ENCODE measurements at regions of chr16 and their contacts with region 1.

Region 1: DNA sequence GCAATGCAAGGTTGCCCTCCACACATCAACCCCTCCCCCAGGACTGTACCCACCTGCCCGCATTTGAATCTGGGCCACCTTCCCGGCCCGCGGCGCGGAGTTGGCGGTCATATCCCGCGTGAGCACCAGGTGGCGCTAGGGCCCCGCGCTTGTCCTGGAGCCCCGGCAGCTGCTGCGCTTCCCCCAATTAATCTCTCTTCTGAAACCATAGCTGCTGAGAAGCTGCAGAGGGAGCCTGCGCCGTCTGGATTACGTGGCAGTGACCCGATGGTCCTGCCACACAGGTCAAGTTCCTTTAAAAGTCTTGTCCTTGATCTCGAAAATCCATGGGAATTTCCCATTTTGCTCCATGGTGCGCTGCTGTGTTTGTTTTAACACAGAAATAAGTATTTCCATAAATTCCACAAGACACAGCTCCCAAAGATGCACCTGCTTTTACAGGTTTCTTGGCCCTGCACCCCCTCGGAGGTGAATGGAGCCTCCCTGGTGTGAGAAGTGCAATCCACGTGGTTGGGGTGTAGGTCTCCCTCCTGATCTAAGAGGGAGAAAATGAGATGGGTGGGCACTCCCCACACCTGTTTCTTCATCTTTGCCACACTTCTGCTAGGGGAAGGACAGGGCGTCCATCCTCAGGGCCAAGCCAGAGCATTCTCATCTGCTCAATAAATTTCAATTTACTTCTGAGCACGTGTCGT is 22.1 kb downstream of the COX4I1 start:
- DNase-seq: peak; percentile 85
- H3K27ac ChIP-seq: no peak overlapping the region
- CTCF ChIP-seq: peak; percentile 95

Region 2: DNA sequence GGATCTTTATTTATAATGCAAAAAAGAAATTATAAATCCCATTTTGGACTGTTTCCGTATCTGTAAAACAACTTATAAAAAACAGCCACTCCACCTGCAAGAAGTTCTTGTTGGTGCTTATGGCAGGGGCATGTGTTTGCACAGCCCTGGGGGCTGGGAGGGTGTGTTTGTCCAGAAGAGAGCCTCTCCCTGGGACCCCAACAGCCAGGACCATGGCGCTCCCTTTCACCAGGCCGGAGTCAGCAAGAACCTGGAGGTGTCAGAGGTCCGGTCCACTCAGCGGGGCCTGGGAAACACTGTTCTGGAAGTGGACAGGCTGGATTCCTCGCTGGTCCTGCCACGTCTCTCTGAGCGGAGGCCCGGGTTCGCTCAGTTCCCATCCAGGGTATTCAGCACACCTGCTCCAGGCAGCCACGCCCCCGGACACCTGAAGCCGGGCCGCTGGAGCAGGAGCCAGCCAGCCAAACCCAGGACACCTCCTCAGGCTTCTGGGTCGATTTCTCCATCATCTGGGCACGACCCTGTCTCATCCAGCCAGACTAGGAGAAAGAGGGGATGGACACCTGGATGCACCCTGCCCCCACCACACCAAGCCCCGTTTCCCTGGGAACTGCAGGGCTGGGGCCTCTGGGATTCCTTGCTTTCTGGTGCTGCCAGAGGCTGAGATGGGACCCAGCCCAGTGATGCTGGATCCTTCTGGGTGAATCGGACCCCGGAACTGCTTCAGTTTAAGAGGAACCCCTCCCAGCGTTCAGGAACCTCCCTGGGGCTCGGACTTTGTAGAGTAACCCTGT is 113.9 kb before region 1 on chr16:
- CTCF ChIA-PET with region 1: no interaction called
- POLR2A ChIA-PET with region 1: no interaction called
- DNase-seq: no peak
- H3K27ac ChIP-seq: peak overlapping the region; percentile 37
- CTCF ChIP-seq: no peak

Region 3: GRCh38 chr16:85898521-85899442 is 77.2 kb after region 1 on chr16 and contains the start of gene IRF8:
- CTCF ChIA-PET with region 1: interaction called, 13 read pairs
- POLR2A ChIA-PET with region 1: no interaction called
- DNase-seq: no peak
- H3K27ac ChIP-seq: no peak within 1 kb of the TSS
- CTCF ChIP-seq: no peak

Region 4: GRCh38 chr16:85986931-85987749 is 165.6 kb after region 1 on chr16:
- CTCF ChIA-PET with region 1: interaction called, 63 read pairs
- POLR2A ChIA-PET with region 1: no interaction called
- DNase-seq: no peak
- H3K27ac ChIP-seq: no peak overlapping the region
- CTCF ChIP-seq: no peak

Region 5: DNA sequence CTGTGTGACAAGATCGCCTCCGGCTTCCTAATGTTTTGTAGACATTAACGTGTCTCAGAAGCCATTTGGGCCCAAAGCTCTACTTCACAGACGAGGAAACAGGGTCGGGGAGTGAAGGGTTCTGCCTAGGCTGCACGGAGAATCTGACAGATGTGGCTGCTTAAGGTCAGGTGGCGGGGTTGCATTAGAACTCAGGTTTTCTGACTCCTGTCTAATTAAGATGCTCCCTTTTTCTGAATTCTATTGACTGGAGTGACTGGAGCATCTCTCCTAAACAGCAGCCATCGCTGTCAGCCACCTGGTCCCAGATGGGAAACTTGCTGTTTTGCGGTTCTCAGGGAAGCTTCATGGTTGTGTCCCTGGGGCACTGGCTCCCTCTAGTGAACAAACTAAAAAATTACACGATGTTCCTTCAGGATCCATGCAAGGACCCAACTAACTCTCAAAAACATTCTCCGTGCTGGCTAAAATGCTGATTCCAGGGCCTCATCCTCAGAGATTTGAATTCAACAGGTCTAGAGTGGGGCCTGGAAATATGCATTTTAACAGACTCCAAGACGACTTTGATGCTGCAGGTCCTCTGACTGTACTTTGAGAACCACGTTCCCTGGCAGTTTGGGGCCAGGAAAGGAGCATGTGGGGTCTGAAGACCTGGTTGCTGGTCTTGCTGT is 194.7 kb after region 1 on chr16:
- CTCF ChIA-PET with region 1: interaction called, 56 read pairs
- POLR2A ChIA-PET with region 1: no interaction called
- DNase-seq: peak; percentile 76
- H3K27ac ChIP-seq: no peak overlapping the region
- CTCF ChIP-seq: peak; percentile 81

Region 6: DNA sequence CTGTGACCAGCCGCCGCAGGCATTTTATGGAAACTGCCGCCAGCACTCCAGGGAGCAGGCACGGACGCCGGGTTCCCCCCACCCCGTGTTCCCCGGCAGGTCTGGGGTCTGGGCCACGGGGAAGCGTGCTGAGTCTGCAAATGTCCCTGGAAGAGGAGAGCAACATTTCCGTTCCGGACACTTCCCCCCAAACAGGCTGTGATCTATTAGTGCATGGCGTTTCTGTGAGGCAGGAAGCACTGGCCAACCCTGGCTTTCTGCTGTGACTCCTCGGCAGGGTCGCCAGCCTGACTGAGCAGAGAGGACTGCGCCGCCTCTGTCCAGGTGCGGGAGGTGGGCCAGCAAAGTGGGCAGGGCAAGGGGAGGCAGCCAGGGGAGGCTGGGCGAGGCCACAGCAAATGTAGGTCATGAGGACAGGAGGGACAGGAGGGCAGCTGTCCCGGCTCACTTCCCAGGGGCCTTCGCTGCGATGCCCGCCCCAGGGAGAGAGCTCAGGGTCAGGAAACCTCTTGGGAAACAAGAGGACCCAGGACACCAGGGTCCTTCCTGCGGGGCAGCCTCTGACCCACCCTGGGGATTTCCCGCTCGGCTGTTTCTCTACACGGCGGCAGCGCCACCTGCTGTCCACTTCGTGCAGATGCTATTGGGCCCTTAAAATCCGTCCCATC is 698.2 kb after region 1 on chr16:
- CTCF ChIA-PET with region 1: interaction called, 24 read pairs
- POLR2A ChIA-PET with region 1: no interaction called
- DNase-seq: peak; percentile 75
- H3K27ac ChIP-seq: no peak overlapping the region
- CTCF ChIP-seq: peak; percentile 93